ENCODE measurements at regions of chr2 and their contacts with region 1.

Region 1: GRCh38 chr2:86079981-86080911 is 25.4 kb downstream of the POLR1A start:
- DNase-seq: peak; percentile 25
- ATAC-seq: peak; percentile 86
- H3K4me3 ChIP-seq: no peak overlapping the region
- H3K27ac ChIP-seq: no peak overlapping the region
- H3K4me1 ChIP-seq: no peaks in the 10 kb centered on the region
- H3K27me3 ChIP-seq: no peaks in the 10 kb centered on the region
- CTCF ChIP-seq: peak; percentile 85

Region 2: DNA sequence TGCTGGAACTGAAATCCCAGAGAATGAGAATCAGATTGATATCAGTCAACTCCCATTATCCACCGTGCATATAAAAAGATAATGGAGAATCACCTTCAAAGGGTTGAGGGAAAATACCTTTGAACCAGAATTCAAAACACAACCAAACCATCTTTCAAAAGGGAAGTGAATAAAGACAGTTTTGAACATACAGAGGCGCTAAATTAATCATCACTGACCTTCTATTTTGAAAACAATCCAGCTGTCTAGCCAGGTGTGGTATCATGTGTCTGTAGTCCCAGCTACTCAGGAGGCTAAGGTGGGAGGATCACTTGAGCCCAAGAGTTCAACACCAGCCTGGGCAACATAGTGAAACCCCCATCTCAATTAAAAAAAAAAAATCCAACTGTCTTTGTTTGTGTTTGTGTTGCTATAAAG is 1263.0 kb before region 1 on chr2:
- CTCF ChIA-PET with region 1: no interaction called
- POLR2A ChIA-PET with region 1: no interaction called
- in situ Hi-C with region 1: no loop called
- intact Hi-C with region 1: no loop called
- DNase-seq: no peak
- ATAC-seq: no peak
- H3K4me3 ChIP-seq: no peak overlapping the region
- H3K27ac ChIP-seq: no peak overlapping the region
- H3K4me1 ChIP-seq: no peaks in the 10 kb centered on the region
- H3K27me3 ChIP-seq: no peaks in the 10 kb centered on the region
- CTCF ChIP-seq: no peak

Region 3: DNA sequence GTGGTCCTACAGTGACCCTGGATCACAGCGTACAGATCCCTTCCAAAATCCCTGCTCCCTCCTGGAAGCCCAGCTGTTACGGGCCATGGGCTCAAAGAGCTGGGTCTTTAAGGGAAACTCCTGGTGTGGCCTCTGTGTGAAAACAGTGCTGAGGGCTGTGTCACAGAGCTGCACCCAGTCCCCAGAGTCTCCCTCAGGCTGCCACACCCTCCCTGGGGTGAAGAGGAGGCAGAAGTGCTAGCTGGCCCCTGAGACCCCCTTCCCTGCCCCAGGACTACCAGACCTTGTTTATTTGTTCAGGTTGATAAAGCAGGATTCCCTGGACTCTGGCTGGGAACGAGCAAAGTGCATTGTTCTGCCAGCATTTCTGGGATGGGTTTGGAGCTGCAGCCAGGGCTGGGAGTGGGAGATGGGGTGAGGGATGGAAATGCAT is 318.7 kb before region 1 on chr2:
- CTCF ChIA-PET with region 1: no interaction called
- POLR2A ChIA-PET with region 1: interaction called, 11 read pairs
- in situ Hi-C with region 1: no loop called
- intact Hi-C with region 1: no loop called
- DNase-seq: no peak
- ATAC-seq: no peak
- H3K4me3 ChIP-seq: no peak overlapping the region
- H3K27ac ChIP-seq: no peak overlapping the region; the same call in 1 of the 2 replicates
- H3K4me1 ChIP-seq: peaks cover 44% of the 10 kb centered on the region
- H3K27me3 ChIP-seq: no peaks in the 10 kb centered on the region
- CTCF ChIP-seq: no peak

Region 4: GRCh38 chr2:85826990-85827878 is 253.0 kb before region 1 on chr2:
- CTCF ChIA-PET with region 1: interaction called, 12 read pairs
- POLR2A ChIA-PET with region 1: interaction called, 3 read pairs
- in situ Hi-C with region 1: no loop called
- intact Hi-C with region 1: loop called (anchors 5 kb)
- DNase-seq: peak; percentile 43
- ATAC-seq: peak; percentile 98
- H3K4me3 ChIP-seq: peak overlapping the region in 1 of 2 experiments; percentile 41; a peak in 2 of 4 replicates
- H3K27ac ChIP-seq: no peak overlapping the region
- H3K4me1 ChIP-seq: 0 out of 2 replicates have a peak, but pooled peaks cover 3% of the 10 kb centered on the region
- H3K27me3 ChIP-seq: peaks cover 5% of the 10 kb centered on the region; the same call in 1 of the 2 replicates
- CTCF ChIP-seq: peak; percentile 94

Region 5: DNA sequence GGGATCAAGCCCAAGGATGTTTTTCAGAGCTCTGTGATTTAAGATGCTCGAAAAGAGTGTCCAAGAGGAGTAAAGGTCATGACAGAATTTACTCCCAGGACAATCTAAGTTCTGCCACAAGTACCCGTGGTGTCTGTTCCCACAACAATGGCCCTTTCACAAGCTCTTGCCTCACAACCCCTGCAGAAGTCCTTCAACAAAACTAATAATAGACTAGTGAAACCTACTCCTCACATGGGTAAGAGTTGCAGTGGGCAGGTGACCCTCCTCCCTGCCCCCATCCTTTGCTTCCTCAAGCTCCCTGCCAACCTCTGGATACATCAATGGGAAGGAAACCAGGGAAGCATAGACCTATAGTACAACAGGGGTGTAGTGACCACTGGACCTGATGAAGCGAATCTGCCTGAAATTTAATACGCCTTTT is 60.7 kb after region 1 on chr2:
- CTCF ChIA-PET with region 1: no interaction called
- POLR2A ChIA-PET with region 1: no interaction called
- in situ Hi-C with region 1: no loop called
- intact Hi-C with region 1: no loop called
- DNase-seq: no peak
- ATAC-seq: peak; percentile 24
- H3K4me3 ChIP-seq: no peak overlapping the region
- H3K27ac ChIP-seq: no peak overlapping the region
- H3K4me1 ChIP-seq: no peaks in the 10 kb centered on the region
- H3K27me3 ChIP-seq: no peaks in the 10 kb centered on the region
- CTCF ChIP-seq: no peak

Region 6: GRCh38 chr2:86753606-86754005 is 673.4 kb after region 1 on chr2:
- CTCF ChIA-PET with region 1: no interaction called
- POLR2A ChIA-PET with region 1: interaction called, 12 read pairs
- in situ Hi-C with region 1: no loop called
- intact Hi-C with region 1: no loop called
- DNase-seq: no peak
- ATAC-seq: no peak
- H3K4me3 ChIP-seq: no peak overlapping the region
- H3K27ac ChIP-seq: no peak overlapping the region
- H3K4me1 ChIP-seq: no peaks in the 10 kb centered on the region
- H3K27me3 ChIP-seq: no peaks in the 10 kb centered on the region
- CTCF ChIP-seq: no peak